ENCODE measurements at regions of chr5 and their contacts with region 1.

Region 1: DNA sequence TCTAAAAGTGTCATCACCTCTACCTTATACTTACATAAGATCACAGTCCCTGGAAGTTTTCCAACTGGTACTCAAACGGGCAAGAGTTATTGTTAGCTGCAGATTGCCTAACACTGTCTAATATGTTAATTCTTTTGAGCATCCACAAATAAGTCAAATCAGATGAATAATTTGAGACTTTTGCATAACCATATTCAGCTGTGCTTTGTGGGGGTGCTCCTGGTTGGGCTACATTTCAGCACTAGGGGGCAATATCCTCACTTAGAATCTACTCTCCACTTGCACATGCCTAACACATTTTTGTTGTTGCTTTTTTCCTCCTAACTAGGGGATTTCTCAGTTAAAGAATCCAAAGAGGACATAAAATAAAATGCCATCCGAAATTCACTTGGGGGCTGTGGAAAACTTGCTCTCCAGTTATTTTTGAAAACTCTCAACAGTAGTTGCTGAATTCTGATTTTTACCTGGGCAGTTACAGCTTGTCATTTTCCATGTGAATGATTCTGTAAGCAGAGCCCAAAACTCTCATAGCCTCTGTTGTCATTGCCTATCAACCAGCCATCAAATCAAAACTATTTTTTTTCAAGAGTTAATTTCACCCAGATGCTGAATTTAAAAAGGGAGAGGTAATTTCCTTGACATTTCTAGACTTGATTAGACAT is 71.5 kb downstream of the TRIM36 start:
- DNase-seq: no peak
- ATAC-seq: peak in 3 of 8 donors; percentile 43 to 58 (median 45)
- H3K4me3 ChIP-seq: no peak overlapping the region
- H3K27ac ChIP-seq: no peak overlapping the region
- H3K4me1 ChIP-seq: no peaks in the 10 kb centered on the region
- H3K27me3 ChIP-seq: peaks cover 0 to 10% (median 0%) of the 10 kb centered on the region in 7 donors
- CTCF ChIP-seq: peak in 8 of 9 donors; percentile 7 to 73 (median 60)

Region 2: GRCh38 chr5:115236599-115236998 is 138.4 kb after region 1 on chr5:
- intact Hi-C with region 1: loop called in 3 of 10 experiments (anchors 5 to 10 kb)
- DNase-seq: no peak
- ATAC-seq: no peak
- H3K4me3 ChIP-seq: no peak overlapping the region
- H3K27ac ChIP-seq: no peak overlapping the region
- H3K4me1 ChIP-seq: peaks cover 0 to 3% (median 0%) of the 10 kb centered on the region in 9 donors
- H3K27me3 ChIP-seq: no peaks in the 10 kb centered on the region
- CTCF ChIP-seq: no peak

Region 3: DNA sequence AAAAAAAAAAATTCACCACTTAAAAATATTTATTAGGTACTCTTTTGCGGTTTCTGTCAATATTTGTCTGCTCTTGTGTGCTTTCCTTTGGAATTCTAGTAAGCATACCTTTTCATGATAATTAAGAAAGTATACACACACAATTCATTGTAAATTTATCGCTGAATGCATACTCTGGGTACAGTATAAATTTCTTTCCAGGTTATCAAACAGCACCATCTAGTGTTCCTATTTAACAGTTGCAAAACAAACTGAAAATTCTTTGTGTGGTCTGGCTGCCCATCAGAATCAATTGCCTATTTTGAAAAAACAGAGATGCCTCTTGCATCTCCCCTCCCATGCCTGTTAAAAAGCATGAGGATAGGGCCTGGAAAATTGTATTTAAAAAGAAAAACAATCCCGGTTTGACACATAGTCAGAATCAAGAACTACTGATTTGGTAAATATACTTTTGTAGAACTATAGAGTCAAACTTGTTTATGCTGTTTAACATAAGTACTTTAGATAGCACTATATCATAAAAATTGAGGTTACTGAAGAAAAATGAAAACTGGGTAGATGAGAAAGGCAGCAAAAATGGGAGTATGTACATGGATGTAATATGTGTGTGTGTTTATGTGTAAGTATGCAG is 148.3 kb after region 1 on chr5:
- intact Hi-C with region 1: loop called in 8 of 10 experiments (anchors 5 to 10 kb)
- DNase-seq: no peak
- ATAC-seq: peak in 1 of 8 donors; percentile 54
- H3K4me3 ChIP-seq: no peak overlapping the region
- H3K27ac ChIP-seq: no peak overlapping the region
- H3K4me1 ChIP-seq: peaks cover 0 to 24% (median 11%) of the 10 kb centered on the region in 9 donors
- H3K27me3 ChIP-seq: no peaks in the 10 kb centered on the region
- CTCF ChIP-seq: peak; percentile 59 to 80 (median 68)

Region 4: GRCh38 chr5:115450741-115451140 is 352.6 kb after region 1 on chr5:
- intact Hi-C with region 1: no loop called
- DNase-seq: no peak
- ATAC-seq: peak in 4 of 8 donors; percentile 25 to 38 (median 28)
- H3K4me3 ChIP-seq: no peak overlapping the region
- H3K27ac ChIP-seq: peak overlapping the region in 3 of 10 donors; percentile 33 to 54 (median 47)
- H3K4me1 ChIP-seq: peaks cover 0 to 37% (median 9%) of the 10 kb centered on the region in 9 donors
- H3K27me3 ChIP-seq: no peaks in the 10 kb centered on the region
- CTCF ChIP-seq: no peak

Region 5: DNA sequence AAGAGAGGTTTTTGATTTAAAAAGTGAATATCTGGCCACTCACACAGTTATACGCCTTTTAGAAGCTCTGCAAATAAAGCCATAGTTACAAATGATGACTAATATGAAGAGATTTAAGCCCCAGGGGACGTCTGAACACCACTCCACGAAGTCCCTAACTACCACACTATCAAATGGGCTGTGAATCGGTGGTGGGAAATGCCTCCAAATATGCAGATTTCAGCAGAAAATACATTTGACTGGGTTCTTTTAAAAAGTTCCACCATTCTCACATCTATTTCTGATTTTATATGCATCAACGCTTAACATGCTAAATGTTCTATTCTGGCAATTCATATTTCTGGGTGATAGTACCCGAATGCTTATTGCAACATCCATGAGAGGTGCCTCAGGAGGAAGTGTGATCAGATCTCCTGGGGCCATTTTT is 481.6 kb after region 1 on chr5:
- intact Hi-C with region 1: loop called in 2 of 10 experiments (anchors 10 kb)
- DNase-seq: no peak
- ATAC-seq: no peak
- H3K4me3 ChIP-seq: no peak overlapping the region
- H3K27ac ChIP-seq: no peak overlapping the region
- H3K4me1 ChIP-seq: peaks cover 0 to 20% (median 0%) of the 10 kb centered on the region in 9 donors
- H3K27me3 ChIP-seq: no peaks in the 10 kb centered on the region
- CTCF ChIP-seq: no peak

Region 6: GRCh38 chr5:115586601-115587048 is 488.5 kb after region 1 on chr5:
- intact Hi-C with region 1: loop called in 1 of 10 experiments (anchors 10 kb)
- DNase-seq: no peak
- ATAC-seq: peak in 3 of 8 donors; percentile 31 to 52 (median 43)
- H3K4me3 ChIP-seq: no peak overlapping the region
- H3K27ac ChIP-seq: no peak overlapping the region
- H3K4me1 ChIP-seq: peaks cover 0 to 33% (median 10%) of the 10 kb centered on the region in 9 donors
- H3K27me3 ChIP-seq: no peaks in the 10 kb centered on the region
- CTCF ChIP-seq: peak; percentile 46 to 76 (median 64)

Region 7: DNA sequence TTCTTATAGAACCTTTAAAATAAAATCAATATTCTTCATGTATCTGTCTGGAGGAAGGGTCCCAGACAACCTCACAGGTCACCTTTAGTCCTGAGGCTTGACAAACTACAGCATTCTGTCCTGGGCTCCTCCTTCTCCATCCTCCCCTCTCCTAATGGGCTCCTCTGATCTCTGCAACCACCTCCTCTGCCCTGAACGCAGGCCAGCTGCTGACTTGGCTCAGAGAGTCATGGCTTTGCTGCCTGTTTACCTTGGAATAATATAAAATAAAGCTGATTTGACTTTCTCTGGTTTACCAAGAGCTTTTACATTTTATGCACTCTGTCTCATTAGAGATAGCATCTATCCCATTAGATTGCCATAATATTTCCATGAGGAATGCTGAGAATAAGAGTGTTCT is 1317.0 kb after region 1 on chr5:
- intact Hi-C with region 1: loop called in 1 of 10 experiments (anchors 5 kb)
- DNase-seq: no peak
- ATAC-seq: no peak
- H3K4me3 ChIP-seq: no peak overlapping the region
- H3K27ac ChIP-seq: no peak overlapping the region
- H3K4me1 ChIP-seq: peaks cover 0 to 30% (median 4%) of the 10 kb centered on the region in 9 donors
- H3K27me3 ChIP-seq: no peaks in the 10 kb centered on the region
- CTCF ChIP-seq: no peak